ENCODE measurements at regions of chr3 and their contacts with region 1.

Region 1: DNA sequence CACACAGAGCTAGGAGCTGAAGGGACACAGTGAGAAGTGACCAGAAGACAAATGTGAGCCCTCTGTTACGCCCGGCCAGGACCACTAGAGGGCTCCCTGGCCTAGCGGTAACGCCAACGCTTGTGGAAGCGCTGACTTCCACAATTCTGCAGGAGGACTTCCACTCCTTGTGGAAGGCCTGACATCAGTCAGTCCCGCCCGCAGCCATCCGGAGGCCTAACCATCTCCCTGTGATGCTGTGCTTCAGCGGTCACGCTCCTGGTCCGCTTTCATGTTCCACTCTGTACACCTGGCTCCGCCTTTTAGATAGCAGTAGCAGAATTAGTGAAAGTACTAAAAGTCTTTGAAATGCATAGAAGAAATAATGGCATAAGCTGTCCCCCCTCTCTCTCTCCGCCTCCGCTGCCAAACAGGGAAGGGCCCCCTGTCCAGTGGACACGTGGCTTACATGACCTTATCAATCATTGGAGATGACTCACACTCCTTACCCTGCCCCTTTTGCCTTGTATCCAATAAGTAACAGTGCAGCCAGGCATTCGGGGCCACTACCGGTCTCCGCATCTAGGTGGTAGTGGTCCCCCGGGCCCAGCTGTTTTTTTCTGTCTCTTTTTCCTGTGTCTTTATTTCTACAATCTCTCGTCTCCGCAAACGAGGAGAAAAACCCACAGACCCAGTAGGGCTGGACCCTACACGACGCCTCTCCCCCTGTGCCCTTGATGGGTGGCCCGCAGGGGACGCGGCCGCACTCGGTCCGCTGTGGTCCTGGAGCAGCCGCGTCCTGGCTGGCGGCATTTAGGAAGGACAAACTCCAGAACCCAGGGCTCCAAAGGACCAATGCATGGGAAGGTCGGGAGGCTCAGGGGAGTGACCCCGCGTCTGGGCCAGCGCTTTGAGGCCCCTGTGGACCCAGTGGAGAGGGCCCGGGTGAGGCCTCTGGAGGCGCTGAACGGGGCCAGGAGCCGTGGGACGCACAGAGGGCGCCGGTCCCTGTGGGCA is 27.0 kb upstream of the RPL32 start:
- DNase-seq: peak in 8 of 9 experiments; percentile 39 to 78 (median 60)
- ATAC-seq: peak; percentile 72
- H3K4me3 ChIP-seq: peak overlapping the region; percentile 42 to 47
- H3K4me3 Mint-ChIP-seq: peak overlapping the region; percentile 78
- H3K27ac ChIP-seq: no peak overlapping the region
- H3K27ac Mint-ChIP-seq: no peak overlapping the region
- H3K4me1 ChIP-seq: peaks cover 9% of the 10 kb centered on the region
- H3K4me1 Mint-ChIP-seq: peaks cover 13% of the 10 kb centered on the region
- H3K27me3 ChIP-seq: peaks cover 3 to 9% of the 10 kb centered on the region in 2 experiments
- H3K27me3 Mint-ChIP-seq: peaks cover 17% of the 10 kb centered on the region
- CTCF ChIP-seq: peak; percentile 73

Region 2: GRCh38 chr3:12886106-12886679 is 17.9 kb after region 1 on chr3:
- CTCF ChIA-PET with region 1: interaction called, 39 read pairs
- POLR2A ChIA-PET with region 1: no interaction called
- intact Hi-C with region 1: no loop called
- DNase-seq: peak in 3 of 9 experiments; percentile 35 to 52 (median 41)
- ATAC-seq: peak; percentile 55
- H3K4me3 ChIP-seq: peak overlapping the region; percentile 0 to 42
- H3K4me3 Mint-ChIP-seq: peak overlapping the region; percentile 63
- H3K27ac ChIP-seq: no peak overlapping the region
- H3K27ac Mint-ChIP-seq: no peak overlapping the region
- H3K4me1 ChIP-seq: peaks cover 15% of the 10 kb centered on the region
- H3K4me1 Mint-ChIP-seq: peaks cover 9% of the 10 kb centered on the region
- H3K27me3 ChIP-seq: peaks cover 0 to 4% of the 10 kb centered on the region in 2 experiments
- H3K27me3 Mint-ChIP-seq: peaks cover 20% of the 10 kb centered on the region
- CTCF ChIP-seq: no peak